OCI-LY7 (cell line): ENCODE measurements at regions of chr5 and their contacts with region 1.

Region 1: GRCh38 chr5:141564216-141564692 is 54.5 kb downstream of the DIAPH1 start:
- DNase-seq: peak; percentile 97
- H3K4me3 ChIP-seq: no peak overlapping the region
- H3K27ac ChIP-seq: peak overlapping the region; percentile 54
- H3K4me1 ChIP-seq: peaks cover 8% of the 10 kb centered on the region
- CTCF ChIP-seq: peak; percentile 100

Region 2: DNA sequence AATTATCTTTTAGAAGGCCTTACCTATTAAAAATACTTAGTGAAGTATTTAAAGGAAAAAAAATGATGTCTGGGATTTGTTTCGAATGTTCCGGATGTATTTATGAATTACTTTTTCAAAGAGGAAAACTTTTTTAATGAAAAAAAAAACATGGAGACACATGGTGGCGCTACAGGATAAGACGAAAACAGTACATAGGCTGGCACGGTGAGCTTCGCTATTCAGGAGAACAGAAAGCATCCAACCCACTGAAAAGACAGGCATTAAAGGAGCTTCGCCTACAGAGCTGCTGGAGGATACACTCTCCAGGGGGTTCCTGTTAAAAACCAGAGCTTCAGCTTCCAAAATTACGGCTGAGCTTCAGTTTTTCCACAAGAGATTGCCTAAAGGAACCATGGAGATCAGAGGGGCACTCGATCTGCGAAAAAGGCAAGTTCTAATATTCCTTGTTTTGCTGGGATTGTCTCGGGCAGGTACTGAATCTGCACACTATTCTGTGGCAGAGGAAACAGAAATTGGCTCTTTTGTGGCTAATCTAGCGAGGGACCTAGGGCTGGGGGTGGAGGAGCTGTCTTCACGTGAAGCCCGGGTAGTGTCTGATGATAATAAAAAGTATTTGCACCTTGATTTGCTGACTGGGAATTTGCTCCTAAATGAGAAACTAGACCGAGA is 341.0 kb before region 1 on chr5 and contains the start of gene PCDHB14:
- CTCF ChIA-PET with region 1: no interaction called
- POLR2A ChIA-PET with region 1: no interaction called
- intact Hi-C with region 1: loop called (anchors 10 kb)
- DNase-seq: peak; percentile 34
- H3K4me3 ChIP-seq: no peak within 1 kb of the TSS
- H3K27ac ChIP-seq: no peak within 1 kb of the TSS
- H3K4me1 ChIP-seq: no peaks in the 10 kb centered on the region
- CTCF ChIP-seq: peak; percentile 73
- total RNA-seq, gene PCDHB14: 0.22 TPM in 1 of 2 replicates, not detected in the other

Region 3: DNA sequence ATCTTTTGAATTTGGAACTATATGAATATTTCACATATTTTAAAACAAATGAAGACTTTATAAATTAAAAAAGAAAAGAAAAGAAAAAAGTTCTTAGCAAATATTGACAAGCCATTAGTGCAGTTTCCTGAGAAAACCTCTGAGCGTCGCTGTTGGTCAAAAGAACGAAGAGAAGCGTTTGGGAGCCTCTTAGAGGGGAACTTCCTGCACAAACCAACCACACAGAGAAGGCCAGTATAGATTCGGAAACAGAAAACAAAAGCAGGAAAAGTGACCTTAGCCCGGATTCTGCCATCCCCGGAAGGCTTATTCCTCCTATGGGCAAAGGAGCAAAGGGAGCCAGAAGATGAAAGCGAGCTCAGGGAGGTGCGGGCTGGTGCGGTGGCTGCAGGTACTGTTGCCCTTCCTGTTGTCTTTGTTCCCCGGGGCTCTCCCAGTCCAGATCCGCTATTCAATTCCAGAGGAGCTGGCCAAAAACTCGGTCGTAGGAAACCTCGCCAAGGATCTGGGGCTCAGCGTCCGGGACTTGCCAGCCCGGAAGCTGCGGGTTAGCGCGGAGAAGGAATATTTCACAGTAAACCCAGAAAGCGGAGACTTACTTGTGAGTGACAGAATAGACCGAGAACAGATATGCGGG is 204.3 kb before region 1 on chr5 and contains the start of gene PCDHGB2:
- CTCF ChIA-PET with region 1: interaction called, 5 read pairs
- POLR2A ChIA-PET with region 1: interaction called, 6 read pairs
- intact Hi-C with region 1: loop called (anchors 1 kb)
- DNase-seq: peak; percentile 85
- H3K4me3 ChIP-seq: peak within 1 kb of the TSS; percentile 65
- H3K27ac ChIP-seq: peak within 1 kb of the TSS; percentile 21
- H3K4me1 ChIP-seq: peaks cover 42% of the 10 kb centered on the region
- CTCF ChIP-seq: peak; percentile 94
- total RNA-seq, gene PCDHGB2: 8.3 and 9.3 TPM in 2 replicates